Vagina (tissue), 2 donors: ENCODE measurements at regions of chr17 and their contacts with region 1.

Region 1: DNA sequence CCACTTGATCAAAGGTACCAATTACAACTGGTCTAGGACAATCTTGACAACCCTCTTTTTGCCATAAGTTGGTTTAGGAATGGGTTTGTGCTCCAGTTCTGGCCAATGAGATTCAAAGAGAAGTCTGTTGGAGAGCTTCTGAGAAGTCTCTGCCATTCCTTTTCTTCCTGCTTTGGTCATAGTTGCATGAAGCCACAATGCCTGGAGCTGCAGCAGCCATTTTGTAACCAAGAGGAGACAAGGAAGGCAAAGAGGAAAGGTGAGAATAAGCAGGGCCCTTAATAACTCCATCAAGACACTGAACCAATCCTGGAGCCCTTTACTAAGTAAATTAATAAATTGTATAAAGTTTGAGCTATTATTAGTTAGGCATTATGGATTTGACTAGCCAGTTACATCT is 3.4 kb upstream of the C17orf50 start:
- DNase-seq: no peak
- H3K4me3 ChIP-seq: no peak overlapping the region
- H3K27ac ChIP-seq: no peak overlapping the region
- H3K4me1 ChIP-seq: no peaks in the 10 kb centered on the region
- H3K27me3 ChIP-seq: no peaks in the 10 kb centered on the region
- CTCF ChIP-seq: no peak
- POLR2A ChIP-seq: no peak

Region 2: DNA sequence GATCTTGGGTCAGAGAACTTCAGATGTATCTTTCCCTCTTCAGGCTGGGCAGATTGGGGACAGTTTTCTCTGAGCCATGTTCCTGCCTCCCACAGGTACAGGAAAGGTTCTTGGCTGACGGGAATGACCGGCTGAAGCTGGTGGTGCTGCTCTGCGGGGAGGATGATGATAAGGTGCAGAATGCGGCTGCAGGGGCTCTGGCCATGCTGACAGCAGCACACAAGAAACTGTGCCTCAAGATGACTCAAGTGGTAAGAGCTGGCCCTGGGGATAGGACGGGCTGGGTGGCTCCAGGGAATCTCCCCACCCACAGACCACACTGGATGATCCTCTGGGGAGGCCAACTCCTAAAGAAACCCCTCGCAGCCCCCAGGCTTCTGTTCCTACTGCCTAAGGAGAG is 573.9 kb before region 1 on chr17:
- intact Hi-C with region 1: no loop called
- DNase-seq: peak in 1 of 2 donors; percentile 69
- H3K4me3 ChIP-seq: no peak overlapping the region
- H3K27ac ChIP-seq: no peak overlapping the region
- H3K4me1 ChIP-seq: no peaks in the 10 kb centered on the region
- H3K27me3 ChIP-seq: no peaks in the 10 kb centered on the region
- CTCF ChIP-seq: no peak
- POLR2A ChIP-seq: no peak

Region 3: GRCh38 chr17:35774499-35774898 is 17.3 kb after region 1 on chr17:
- intact Hi-C with region 1: no loop called
- DNase-seq: no peak
- H3K4me3 ChIP-seq: no peak overlapping the region
- H3K27ac ChIP-seq: peak overlapping the region; percentile 25
- H3K4me1 ChIP-seq: peaks cover 26% of the 10 kb centered on the region
- H3K27me3 ChIP-seq: no peaks in the 10 kb centered on the region
- CTCF ChIP-seq: no peak
- POLR2A ChIP-seq: no peak

Region 4: DNA sequence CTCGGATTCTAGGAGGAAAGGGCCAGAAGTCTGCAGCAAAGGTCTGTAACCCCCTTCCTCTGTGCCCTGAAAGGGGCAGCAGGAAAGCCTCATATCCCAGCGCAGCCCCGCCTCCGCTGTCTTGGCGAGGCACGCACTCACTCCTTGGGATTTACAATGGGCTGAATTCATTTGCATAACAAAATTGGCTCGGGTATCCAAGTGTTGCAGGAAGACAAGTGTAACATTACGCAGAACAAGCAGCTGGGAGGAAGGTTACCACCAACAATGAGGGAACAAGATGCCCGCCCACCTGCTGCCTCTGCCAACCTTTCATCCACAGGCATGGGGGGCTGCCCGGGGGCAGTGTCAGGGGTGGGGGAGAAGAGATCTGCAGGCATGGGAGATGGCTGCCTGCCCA is 974.6 kb after region 1 on chr17:
- intact Hi-C with region 1: loop called (anchors 5 kb)
- DNase-seq: no peak
- H3K4me3 ChIP-seq: no peak overlapping the region
- H3K27ac ChIP-seq: no peak overlapping the region
- H3K4me1 ChIP-seq: no peaks in the 10 kb centered on the region
- H3K27me3 ChIP-seq: peaks cover 3% of the 10 kb centered on the region
- CTCF ChIP-seq: no peak
- POLR2A ChIP-seq: no peak